Ascending aorta (tissue), 2 donors: ENCODE measurements at regions of chr9 and their contacts with region 1.

Region 1: DNA sequence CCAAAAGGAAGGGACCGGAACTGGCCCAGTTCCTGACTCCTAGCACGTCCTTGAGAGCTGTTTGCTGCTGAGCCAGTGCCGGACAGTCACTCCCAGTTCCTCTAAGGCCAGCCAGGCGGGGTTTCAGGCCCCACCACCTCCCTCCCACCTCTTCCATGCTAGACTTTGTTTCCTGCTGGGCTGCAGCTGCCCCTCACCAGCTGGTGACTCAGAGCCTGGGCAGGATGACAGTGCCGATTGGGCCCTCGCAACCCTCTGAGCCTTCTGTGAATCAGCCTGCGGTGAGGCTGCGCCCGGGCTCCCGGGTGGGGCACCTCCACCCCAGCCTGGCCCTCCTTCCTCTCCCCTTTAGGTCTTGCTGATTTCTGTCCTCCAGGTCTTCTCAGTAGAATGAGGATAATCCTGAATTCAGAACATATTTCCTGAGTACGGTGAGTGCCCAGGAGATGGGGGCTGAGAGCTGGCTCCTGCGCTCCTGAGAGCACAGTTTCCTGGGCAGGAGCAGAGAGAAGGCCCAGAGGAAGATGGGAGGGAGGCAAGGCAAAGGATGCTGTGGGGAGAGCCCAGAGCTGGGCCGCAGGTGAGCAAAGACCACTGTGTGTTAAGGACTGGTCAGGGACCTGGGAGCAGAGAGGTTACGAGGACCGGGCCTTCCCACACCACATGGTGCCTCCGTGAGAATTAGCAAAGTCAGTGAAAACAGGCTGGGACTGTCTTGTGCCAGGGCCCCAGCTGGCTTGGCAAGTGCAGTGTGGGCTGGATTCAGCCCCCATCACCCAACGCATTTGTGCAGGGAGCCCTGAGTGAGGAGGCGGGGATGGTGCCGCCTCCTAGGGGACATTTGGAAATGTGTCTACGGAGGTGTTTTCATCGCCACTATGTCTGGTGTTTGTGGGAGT is 32.9 kb upstream of the STXBP1 start:
- DNase-seq: peak; percentile 92 to 98
- H3K4me3 ChIP-seq: peak overlapping the region; percentile 33 to 57
- H3K27ac ChIP-seq: peak overlapping the region; percentile 97
- H3K4me1 ChIP-seq: peaks cover 10 to 32% of the 10 kb centered on the region in 2 donors
- H3K27me3 ChIP-seq: no peaks in the 10 kb centered on the region
- CTCF ChIP-seq: peak; percentile 46 to 60 (median 48)

Region 2: DNA sequence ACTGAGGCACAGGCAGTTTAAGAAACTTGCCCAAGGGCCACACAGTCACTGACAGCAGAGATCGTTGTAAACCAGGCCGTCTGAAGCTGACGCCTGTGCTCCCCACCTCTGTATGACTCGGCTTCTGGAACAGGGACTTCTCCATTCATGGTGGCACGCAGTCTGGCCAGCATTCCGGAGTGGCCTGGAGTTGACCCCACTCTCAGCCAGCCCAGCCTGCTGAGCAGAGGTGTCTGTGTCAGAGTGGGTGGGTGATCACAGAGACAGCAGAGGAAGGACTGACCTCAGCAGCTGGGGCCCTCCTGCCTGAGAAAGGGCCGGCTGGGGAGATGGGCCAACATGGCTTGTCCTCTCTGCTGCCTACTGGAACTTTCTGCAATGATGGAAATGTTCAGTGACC is 115.3 kb before region 1 on chr9:
- intact Hi-C with region 1: no loop called
- DNase-seq: no peak
- H3K4me3 ChIP-seq: no peak overlapping the region
- H3K27ac ChIP-seq: no peak overlapping the region
- H3K4me1 ChIP-seq: peaks cover 0 to under 1% of the 10 kb centered on the region in 2 donors
- H3K27me3 ChIP-seq: no peaks in the 10 kb centered on the region
- CTCF ChIP-seq: no peak

Region 3: DNA sequence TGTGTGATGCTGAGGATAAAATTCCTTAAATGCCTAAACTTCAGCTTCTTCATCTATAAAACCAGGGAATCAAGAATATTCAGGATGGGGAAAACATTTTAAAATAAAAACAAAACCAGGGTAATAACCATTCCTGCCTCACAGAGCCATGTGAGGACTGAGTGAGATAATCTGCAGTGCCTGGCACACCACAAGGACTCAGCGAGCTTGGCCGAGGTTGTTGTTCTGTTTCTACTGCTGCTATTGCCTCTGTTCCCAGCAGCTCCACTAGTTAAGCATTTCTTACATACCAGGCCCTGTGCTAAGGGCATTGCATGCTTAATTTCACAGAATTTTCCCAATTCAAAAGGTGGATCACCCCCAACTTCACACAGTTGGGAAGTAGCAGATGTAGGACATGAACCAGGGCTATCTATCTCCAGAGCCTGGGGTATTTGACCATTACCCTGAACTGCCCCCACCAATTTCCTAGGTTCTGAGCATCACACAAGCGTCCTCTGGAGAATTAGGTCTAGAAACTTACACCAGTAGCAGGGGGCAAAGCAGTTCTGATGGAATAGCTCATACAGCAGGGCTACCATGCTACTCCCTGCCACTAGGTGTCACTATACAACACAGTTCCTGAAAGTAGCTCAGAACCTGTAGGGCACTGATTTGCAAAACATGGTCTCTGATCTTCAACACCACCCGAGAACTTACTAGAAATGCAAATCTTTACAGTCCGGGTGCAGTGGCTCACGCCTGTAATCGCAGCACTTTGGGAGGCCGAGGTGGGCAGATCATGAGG is 53.6 kb before region 1 on chr9:
- intact Hi-C with region 1: loop called (anchors 2 kb)
- DNase-seq: no peak
- H3K4me3 ChIP-seq: no peak overlapping the region
- H3K27ac ChIP-seq: peak overlapping the region; percentile 58 to 63
- H3K4me1 ChIP-seq: peaks cover 14 to 39% of the 10 kb centered on the region in 2 donors
- H3K27me3 ChIP-seq: no peaks in the 10 kb centered on the region
- CTCF ChIP-seq: peak; percentile 30 to 42 (median 42)

Region 4: GRCh38 chr9:127541877-127542276 is 37.3 kb before region 1 on chr9:
- intact Hi-C with region 1: loop called (anchors 2 kb)
- DNase-seq: peak; percentile 63 to 96
- H3K4me3 ChIP-seq: peak overlapping the region in 1 of 2 donors; percentile 18
- H3K27ac ChIP-seq: peak overlapping the region; percentile 79 to 82
- H3K4me1 ChIP-seq: peaks cover 38 to 58% of the 10 kb centered on the region in 2 donors
- H3K27me3 ChIP-seq: no peaks in the 10 kb centered on the region
- CTCF ChIP-seq: peak in 1 of 3 experiments; percentile 5

Region 5: DNA sequence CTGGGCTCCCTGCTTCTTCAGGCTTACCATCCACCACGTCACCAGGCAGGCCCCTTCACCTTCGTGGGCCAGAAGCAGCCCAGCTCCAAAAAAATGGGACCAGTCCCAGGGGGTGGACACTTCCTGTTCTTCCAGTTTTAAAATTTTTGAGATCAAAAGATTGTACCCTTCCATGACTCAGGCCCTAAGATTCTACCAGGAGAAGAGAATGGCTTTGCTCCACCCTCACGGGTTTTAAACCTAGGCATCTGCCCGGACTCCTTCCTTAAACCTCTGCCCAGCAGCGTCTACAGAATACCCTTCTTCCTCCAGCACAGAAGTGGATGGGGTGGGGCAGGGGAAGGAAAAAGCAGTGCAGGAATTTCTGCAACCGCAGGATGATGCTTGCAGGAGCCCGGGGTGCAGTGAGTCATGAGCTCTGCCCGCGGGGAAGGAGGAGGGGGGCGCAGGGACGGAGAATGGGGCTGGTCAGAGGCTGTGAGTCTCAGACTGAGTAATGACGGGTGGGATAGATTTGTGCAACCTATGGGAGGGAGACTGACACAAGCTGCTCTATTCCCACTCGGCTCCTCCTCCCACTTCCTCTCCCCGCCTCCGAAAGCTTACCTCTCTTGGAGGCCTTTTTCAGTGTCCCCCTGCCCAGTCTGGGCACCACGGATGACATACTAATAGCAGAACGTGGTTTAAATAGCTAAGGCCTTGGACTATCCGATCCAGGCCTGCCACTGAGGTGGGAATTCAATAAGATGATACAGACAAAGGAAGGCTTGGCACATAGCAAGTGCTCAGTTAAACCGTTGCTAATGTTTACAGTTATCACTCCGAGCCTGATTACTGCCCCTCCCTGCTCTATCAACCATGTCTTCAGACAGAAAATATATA is 17.3 kb before region 1 on chr9:
- intact Hi-C with region 1: loop called (anchors 1 kb)
- DNase-seq: peak; percentile 85 to 97
- H3K4me3 ChIP-seq: peak overlapping the region; percentile 1 to 17
- H3K27ac ChIP-seq: peak overlapping the region; percentile 85 to 90
- H3K4me1 ChIP-seq: peaks cover 30 to 54% of the 10 kb centered on the region in 2 donors
- H3K27me3 ChIP-seq: no peaks in the 10 kb centered on the region
- CTCF ChIP-seq: no peak

Region 6: GRCh38 chr9:127608104-127608966 is 29.1 kb after region 1 on chr9:
- intact Hi-C with region 1: no loop called
- DNase-seq: no peak
- H3K4me3 ChIP-seq: peak overlapping the region; percentile 47 to 62
- H3K27ac ChIP-seq: peak overlapping the region in 1 of 2 donors; percentile 7
- H3K4me1 ChIP-seq: peaks cover 0 to 16% of the 10 kb centered on the region in 2 donors
- H3K27me3 ChIP-seq: no peaks in the 10 kb centered on the region
- CTCF ChIP-seq: no peak